Activated T-helper 1 cell treated with anti-CD3 and anti-CD28 coated beads, Interleukin-12 subunit alpha, Interleukin-12 subunit beta, Interleukin-2, Interleukin-4 antibody, amounts not matched to agents 30 ng/mL and 10 ng/mL and 1 ng/mL, durations not matched to agents 14 hours and 24 hours and 36 hours (primary cell): ENCODE measurements at regions of chr6 and their contacts with region 1.

Region 1: DNA sequence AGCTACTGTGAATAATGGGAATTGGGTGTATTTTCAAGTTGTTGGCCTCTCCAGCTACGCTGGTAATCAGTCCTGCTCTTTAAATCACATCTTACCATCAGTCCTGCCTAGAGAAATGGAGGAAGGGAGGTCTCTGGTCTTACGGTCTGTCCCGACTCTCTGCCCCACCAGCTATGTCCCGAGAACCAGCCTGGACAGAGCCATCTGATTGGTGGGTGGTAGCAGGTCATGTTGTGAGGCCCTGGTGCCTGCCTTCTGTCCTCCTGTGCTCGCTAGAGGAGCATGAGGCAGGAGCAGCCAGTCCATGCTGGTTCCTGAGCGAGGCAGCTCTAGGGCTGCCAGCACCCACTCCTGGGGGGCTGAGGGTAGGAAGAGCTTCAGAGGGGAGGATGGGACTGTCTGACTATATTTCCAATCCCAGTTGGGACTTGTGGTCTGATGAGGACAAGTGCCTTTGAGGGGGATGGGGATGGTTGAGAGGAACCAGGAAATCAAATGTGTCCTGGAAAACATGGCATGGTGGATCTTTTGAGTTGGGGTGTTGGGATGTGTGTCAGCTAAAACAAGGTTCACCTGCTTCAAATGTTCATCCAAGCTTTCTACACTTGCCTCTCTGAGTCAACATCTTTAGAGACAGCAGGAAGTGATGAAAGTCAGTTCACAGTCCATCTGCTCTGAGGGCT is 33.0 kb downstream of the SYNJ2 start:
- DNase-seq: no peak
- H3K4me3 Mint-ChIP-seq: no peak overlapping the region
- H3K27ac Mint-ChIP-seq: peak overlapping the region; percentile 56
- H3K4me1 Mint-ChIP-seq: peaks cover 48% of the 10 kb centered on the region
- H3K27me3 Mint-ChIP-seq: no peaks in the 10 kb centered on the region

Region 2: DNA sequence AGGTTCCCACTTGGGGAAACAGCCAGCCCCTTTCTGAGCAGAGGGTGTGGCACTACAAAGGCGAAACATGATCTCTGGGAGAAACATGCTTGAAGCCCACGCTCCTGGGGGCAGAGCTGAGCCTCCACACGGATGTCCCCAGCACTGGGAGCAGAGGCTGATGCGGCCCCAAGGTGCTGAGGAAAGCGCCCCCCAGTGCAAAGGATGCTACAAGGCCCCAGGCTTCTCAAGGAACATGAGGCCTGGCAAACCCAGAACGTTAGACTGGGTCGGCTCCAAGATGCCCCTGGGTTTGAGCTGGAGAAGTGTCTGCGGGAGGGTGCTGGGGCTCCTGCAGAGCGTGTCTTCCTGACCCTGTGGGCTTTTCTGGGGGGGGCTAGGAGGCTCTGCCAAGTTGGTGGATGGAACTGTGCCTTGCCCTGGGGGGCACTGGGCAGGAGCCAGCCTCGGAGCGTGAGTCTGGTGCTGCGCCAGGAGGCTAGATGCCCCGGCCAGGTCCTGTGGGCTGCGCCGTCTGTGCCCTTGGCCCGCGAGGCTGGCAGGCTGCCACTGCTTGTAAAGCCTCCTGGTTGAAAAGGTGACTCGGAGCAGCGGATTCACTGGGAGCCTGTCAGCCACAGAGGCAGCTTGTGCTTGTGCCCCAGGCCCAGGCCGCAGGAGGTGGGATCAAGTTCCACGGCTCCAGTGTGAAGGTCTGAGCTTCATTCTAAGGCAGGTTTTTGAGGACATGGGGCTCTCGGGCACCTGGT is 24.9 kb before region 1 on chr6:
- intact Hi-C with region 1: loop called (anchors 2 kb)
- DNase-seq: no peak
- H3K4me3 Mint-ChIP-seq: peak overlapping the region; percentile 22
- H3K27ac Mint-ChIP-seq: no peak overlapping the region
- H3K4me1 Mint-ChIP-seq: peaks cover 57% of the 10 kb centered on the region
- H3K27me3 Mint-ChIP-seq: no peaks in the 10 kb centered on the region

Region 3: GRCh38 chr6:158002951-158003853 is 11.4 kb before region 1 on chr6:
- intact Hi-C with region 1: loop called (anchors 1 kb)
- DNase-seq: no peak
- H3K4me3 Mint-ChIP-seq: peak overlapping the region; percentile 2
- H3K27ac Mint-ChIP-seq: peak overlapping the region; percentile 64
- H3K4me1 Mint-ChIP-seq: peaks cover 47% of the 10 kb centered on the region
- H3K27me3 Mint-ChIP-seq: no peaks in the 10 kb centered on the region

Region 4: GRCh38 chr6:158468666-158469065 is 454.0 kb after region 1 on chr6:
- intact Hi-C with region 1: no loop called
- DNase-seq: no peak
- H3K4me3 Mint-ChIP-seq: no peak overlapping the region
- H3K27ac Mint-ChIP-seq: no peak overlapping the region
- H3K4me1 Mint-ChIP-seq: no peaks in the 10 kb centered on the region
- H3K27me3 Mint-ChIP-seq: no peaks in the 10 kb centered on the region